IMR-90 (cell line): ENCODE measurements at regions of chr11 and their contacts with region 1.

Region 1: DNA sequence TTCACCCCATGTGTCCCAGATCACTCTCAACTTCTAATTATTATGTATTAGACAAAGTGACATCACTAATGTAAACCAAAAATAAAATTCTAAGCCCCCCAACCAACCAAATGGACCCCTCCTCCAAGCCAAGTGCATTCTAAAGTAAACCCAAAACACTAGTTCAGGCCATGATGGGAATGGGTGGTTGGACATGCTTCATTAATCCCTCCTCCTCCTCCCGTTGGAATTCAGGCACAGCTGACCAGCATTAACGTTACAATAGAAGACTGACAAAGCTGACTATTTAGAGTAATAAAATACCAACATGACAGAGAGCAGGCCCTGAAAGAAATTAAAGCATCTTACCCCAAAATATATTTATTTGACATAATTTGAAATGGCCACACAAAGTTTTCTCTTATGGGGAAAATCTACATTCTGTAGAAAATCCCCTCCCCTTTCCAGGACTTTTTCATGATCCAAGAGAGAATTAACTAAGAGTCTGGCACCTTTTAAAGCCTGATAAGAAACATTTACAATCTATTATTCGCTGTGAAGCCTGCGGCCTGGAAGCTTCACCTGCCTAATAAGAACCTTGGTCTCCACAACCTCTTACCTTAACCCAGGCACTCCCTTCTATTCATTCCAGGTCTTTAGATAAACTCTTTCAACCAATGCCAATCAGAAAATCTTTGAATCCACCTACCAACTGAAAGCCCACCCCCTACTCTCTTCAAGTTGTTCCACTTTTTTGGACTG is 948.5 kb upstream of the CCDC90B start:
- DNase-seq: no peak
- ATAC-seq: no peak
- H3K4me3 ChIP-seq: no peak overlapping the region
- H3K27ac ChIP-seq: no peak overlapping the region
- H3K4me1 ChIP-seq: no peaks in the 10 kb centered on the region
- H3K27me3 ChIP-seq: no peaks in the 10 kb centered on the region
- CTCF ChIP-seq: no peak
- POLR2A ChIP-seq: no peak
- RAD21 ChIP-seq: no peak

Region 2: GRCh38 chr11:84497981-84498411 is 263.4 kb after region 1 on chr11:
- CTCF ChIA-PET with region 1: no interaction called
- POLR2A ChIA-PET with region 1: no interaction called
- dilution Hi-C with region 1: no loop called
- in situ Hi-C with region 1: no loop called
- intact Hi-C with region 1: loop called (anchors 5 kb)
- DNase-seq: no peak
- ATAC-seq: no peak
- H3K4me3 ChIP-seq: no peak overlapping the region
- H3K27ac ChIP-seq: no peak overlapping the region
- H3K4me1 ChIP-seq: no peaks in the 10 kb centered on the region
- H3K27me3 ChIP-seq: no peaks in the 10 kb centered on the region
- CTCF ChIP-seq: no peak
- POLR2A ChIP-seq: no peak
- RAD21 ChIP-seq: no peak

Region 3: GRCh38 chr11:84558085-84558905 is 323.7 kb after region 1 on chr11:
- CTCF ChIA-PET with region 1: no interaction called
- POLR2A ChIA-PET with region 1: no interaction called
- dilution Hi-C with region 1: no loop called
- in situ Hi-C with region 1: no loop called
- intact Hi-C with region 1: no loop called
- DNase-seq: peak; percentile 53
- ATAC-seq: peak; percentile 95
- H3K4me3 ChIP-seq: no peak overlapping the region
- H3K27ac ChIP-seq: no peak overlapping the region
- H3K4me1 ChIP-seq: no peaks in the 10 kb centered on the region
- H3K27me3 ChIP-seq: no peaks in the 10 kb centered on the region
- CTCF ChIP-seq: peak; percentile 78
- POLR2A ChIP-seq: no peak
- RAD21 ChIP-seq: peak; percentile 55